ENCODE measurements at regions of chr7 and their contacts with region 1.

Region 1: GRCh38 chr7:43721193-43721806 is 8.0 kb downstream of the COA1 start:
- DNase-seq: peak; percentile 29
- H3K4me3 ChIP-seq: no peak overlapping the region
- H3K27ac ChIP-seq: no peak overlapping the region
- H3K4me1 ChIP-seq: no peaks in the 10 kb centered on the region
- H3K27me3 ChIP-seq: no peaks in the 10 kb centered on the region
- CTCF ChIP-seq: peak; percentile 43 to 80 (median 73)
- POLR2A ChIP-seq: no peak

Region 2: DNA sequence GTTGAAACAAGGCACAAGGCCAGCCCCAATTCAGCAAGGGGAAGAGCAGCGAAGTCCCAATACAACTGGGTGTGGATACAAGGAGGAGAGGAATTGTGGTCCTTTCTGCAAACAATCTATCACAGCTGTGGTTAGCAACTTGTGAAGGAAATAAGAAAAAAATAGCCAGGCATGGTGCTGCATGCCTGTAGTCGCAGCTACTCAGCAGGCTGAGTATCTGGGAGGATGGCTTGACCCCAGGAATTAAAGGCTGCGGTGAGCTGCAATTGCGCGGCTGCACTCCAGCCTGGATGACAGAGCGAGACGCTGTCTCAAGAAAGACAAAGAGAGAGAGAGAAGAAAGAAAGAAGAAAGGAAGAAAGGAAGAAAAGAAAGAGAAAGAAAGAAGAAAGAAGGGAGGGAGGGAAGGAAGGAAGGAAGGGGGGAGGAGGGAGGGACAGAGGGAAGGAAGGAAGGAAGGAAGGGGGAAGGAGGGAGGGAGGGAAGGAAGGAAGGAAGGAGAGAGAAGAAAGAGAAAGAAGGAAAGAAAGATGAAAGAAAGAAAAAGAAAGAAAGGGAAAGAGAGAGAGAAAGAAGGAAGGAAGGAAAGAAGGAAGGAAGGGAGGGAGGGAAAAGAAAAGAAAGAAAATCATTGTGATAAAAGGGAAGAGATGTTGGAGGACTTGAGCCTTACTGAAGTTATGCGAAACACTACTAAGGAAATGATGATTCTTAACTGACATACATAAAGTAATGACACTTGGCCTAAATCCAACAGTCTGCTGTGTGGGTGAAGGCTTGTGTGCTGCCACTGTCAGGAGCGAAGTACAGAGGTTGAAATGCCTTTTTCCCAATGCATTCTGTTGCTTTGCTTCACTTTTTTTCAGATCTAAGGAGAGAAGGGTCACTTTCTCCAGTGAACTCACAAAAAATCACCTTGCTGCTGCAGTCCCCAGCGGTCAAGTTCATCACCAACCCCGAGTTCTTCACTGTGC is 255.4 kb before region 1 on chr7:
- intact Hi-C with region 1: no loop called
- DNase-seq: no peak
- H3K4me3 ChIP-seq: no peak overlapping the region
- H3K27ac ChIP-seq: no peak overlapping the region
- H3K4me1 ChIP-seq: no peaks in the 10 kb centered on the region
- H3K27me3 ChIP-seq: no peaks in the 10 kb centered on the region
- CTCF ChIP-seq: no peak
- POLR2A ChIP-seq: no peak

Region 3: DNA sequence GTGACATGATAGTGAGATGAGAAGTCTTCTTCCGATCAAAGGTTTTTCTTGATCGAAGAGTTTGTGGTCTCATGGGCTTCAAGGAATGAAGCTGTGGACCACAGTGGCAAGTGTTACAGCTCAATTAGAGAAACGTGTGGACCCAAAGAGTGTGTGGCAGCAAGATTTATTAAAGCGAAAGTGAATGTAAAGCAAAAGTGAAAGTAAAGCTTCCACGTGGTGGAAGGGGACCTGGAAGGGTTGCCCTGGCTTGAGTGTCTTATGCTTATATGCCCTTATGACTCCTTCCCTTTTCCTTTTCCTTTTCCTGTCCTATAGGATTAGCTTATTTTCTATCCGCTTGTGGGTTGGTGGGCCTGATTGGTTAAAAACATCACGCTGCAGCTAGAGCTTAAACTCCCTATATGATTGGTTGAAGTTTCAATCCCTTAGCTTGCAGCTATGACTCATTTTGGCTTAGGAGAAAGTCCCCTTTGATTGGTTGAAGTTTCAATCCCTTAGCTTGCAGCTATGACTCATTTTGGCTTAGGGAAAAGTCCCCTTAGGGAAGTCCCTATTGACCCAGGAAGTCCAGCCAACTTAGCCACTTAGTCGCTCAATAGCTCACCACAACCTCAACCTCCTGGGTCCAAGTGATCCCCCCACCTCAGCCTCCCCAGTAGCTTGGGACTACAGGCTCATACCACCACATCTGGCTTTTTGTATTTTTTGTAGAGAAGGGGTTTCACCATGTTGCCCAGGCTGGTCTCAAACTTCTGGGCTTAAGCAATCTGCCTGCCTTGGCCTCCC is 113.4 kb after region 1 on chr7:
- intact Hi-C with region 1: loop called (anchors 5 kb)
- DNase-seq: no peak
- H3K4me3 ChIP-seq: no peak overlapping the region
- H3K27ac ChIP-seq: no peak overlapping the region
- H3K4me1 ChIP-seq: no peaks in the 10 kb centered on the region
- H3K27me3 ChIP-seq: no peaks in the 10 kb centered on the region
- CTCF ChIP-seq: no peak
- POLR2A ChIP-seq: no peak

Measured in prostate gland (tissue), 2 donors.